GM12878 (cell line): ENCODE measurements at regions of chr3 and their contacts with region 1.

Region 1: DNA sequence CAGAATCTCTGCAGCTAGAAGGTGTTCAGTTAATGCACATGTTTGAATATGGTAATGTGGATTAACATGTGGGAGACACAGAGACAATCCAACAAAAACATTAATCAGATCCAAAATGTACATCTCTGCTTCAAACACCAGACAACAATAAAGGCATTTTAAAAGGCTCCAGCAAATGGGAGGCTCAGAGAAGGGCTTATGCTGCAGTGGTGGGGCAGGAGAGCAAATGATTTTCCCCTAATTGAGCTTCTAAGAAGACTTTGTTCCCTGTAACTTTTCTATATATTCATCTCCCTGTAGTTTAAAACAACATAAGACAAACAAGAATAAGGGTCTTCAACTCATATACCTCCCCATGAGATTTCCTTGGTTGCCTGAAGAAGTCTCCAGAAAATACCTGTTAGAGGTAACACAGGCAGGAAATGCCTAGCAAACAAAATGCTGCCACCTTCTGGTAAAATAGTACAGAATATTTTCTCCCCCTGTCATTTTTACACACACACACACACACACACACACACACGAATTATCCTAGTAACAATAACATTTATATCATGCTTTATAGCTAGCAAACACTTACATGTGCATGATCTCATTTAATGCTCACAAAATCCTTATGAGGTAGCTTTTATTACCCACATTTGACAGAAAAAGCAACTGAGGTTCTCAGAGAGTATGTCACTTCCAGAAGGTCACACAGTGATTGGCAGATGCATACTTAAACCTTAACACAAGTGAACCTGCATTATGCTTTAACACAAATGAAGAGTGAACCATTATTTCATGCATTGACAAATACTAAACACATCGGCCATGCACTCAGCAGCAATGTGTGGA is 123.4 kb upstream of the MB21D2 start:
- DNase-seq: peak; percentile 5
- ATAC-seq: peak; percentile 83
- H3K4me3 ChIP-seq: no peak overlapping the region
- H3K27ac ChIP-seq: no peak overlapping the region
- H3K4me1 ChIP-seq: no peaks in the 10 kb centered on the region
- H3K27me3 ChIP-seq: no peaks in the 10 kb centered on the region
- CTCF ChIP-seq: peak; percentile 22 to 56 (median 38); a peak in 5 of 6 replicates
- EP300 ChIP-seq: no peak
- POLR2A ChIP-seq: no peak
- RAD21 ChIP-seq: peak; percentile 84

Region 2: DNA sequence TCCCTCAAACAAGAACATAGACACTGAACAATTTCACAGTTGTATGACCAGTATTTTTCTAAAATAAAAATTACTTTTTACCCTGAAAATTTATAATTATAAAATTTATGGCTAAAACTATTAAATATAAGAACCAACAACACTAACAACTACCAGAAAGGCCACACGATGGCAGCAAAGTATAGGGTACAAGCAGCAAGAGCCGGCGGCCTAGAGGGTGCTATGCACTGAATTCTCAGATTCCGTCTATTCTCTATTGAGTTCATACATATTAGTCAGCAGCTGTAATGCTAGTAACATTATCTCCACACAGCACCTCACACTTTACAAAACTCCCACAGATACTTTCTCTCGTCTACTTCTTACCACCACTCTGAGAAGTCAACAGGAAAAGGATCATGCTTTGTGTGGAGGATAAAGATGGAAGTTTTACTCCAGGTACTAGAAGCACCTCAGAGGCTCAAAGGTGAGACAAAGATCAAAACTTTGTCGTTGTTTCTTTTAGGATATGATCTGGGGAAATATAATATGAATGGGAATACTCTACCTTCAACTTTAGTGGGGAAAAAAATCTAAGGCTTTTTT is 474.3 kb before region 1 on chr3:
- CTCF ChIA-PET with region 1: interaction called, 15 read pairs
- POLR2A ChIA-PET with region 1: no interaction called
- RAD21 ChIA-PET with region 1: interaction called, 7 read pairs
- SMC1A ChIA-PET with region 1: interaction called, 7 read pairs
- in situ Hi-C with region 1: loop called (anchors 5 kb)
- intact Hi-C with region 1: loop called (anchors 5 kb)
- DNase-seq: peak; percentile 9
- ATAC-seq: peak; percentile 95
- H3K4me3 ChIP-seq: no peak overlapping the region
- H3K27ac ChIP-seq: no peak overlapping the region
- H3K4me1 ChIP-seq: no peaks in the 10 kb centered on the region; the same call in 1 of the 2 replicates
- H3K27me3 ChIP-seq: no peaks in the 10 kb centered on the region; a peak in 1 of 4 replicates
- CTCF ChIP-seq: peak; percentile 51 to 81 (median 56); a peak in 5 of 6 replicates
- EP300 ChIP-seq: no peak
- POLR2A ChIP-seq: no peak
- RAD21 ChIP-seq: peak; percentile 93

Region 3: DNA sequence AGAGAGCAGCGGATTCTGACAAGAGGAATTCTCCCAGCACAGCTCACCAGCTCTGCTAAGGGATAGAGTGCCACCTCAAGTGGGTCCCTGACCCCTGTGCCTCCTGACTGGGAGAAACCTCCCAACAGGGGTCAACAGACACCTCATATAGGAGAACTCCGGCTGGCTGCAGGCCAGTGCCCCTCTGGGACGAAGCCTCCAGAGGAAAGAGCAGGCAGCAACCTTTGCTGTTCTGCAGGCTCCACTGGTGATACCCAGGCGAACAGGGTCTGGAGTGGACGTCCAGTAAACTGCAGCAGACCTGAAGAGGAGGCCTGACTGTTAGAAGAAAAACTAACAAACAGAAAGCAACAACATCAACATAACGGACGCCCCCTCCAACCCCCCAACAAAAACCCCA is 282.4 kb before region 1 on chr3:
- CTCF ChIA-PET with region 1: no interaction called
- POLR2A ChIA-PET with region 1: no interaction called
- RAD21 ChIA-PET with region 1: no interaction called
- SMC1A ChIA-PET with region 1: no interaction called
- in situ Hi-C with region 1: no loop called
- intact Hi-C with region 1: no loop called
- DNase-seq: no peak
- ATAC-seq: no peak
- H3K4me3 ChIP-seq: no peak overlapping the region
- H3K27ac ChIP-seq: no peak overlapping the region
- H3K4me1 ChIP-seq: no peaks in the 10 kb centered on the region
- H3K27me3 ChIP-seq: 0 out of 4 replicates have a peak, but pooled peaks cover 0 to 3% of the 10 kb centered on the region in 2 experiments
- CTCF ChIP-seq: no peak
- EP300 ChIP-seq: no peak
- POLR2A ChIP-seq: no peak
- RAD21 ChIP-seq: no peak

Region 4: DNA sequence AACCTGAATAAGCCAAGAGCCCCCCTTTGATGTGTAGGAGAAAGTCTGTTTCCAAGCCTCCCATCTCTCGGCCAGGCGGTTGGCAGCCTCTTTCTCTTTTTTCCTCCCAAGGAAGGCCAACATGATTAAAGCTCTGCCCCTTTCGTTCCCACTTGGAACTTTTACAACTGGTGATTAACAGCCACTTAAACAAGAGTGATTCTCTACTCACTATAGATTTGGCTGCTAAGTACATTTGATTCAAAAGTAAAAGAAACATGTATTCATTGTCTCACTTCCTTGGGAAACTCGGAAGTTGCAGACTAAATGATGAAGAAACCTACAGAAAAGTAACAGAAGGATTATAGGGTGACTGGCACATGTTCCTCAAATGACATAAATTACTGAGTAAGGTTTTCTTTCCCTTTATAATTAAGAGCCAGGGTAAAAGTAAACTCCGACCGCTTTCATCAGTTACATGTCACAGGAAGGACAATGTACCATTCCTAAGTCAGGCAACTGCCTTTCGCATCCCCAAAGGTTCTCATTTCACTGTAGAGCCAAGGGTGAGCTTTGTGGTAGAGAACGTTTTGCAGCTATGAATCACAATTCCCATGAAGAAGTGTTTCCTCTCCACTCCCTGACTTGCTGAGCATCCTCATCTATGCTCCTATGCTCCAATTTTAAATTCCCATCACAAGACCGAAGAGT is 196.1 kb before region 1 on chr3:
- CTCF ChIA-PET with region 1: interaction called, 10 read pairs
- POLR2A ChIA-PET with region 1: no interaction called
- RAD21 ChIA-PET with region 1: no interaction called
- SMC1A ChIA-PET with region 1: interaction called, 3 read pairs
- in situ Hi-C with region 1: no loop called
- intact Hi-C with region 1: no loop called
- DNase-seq: no peak
- ATAC-seq: no peak
- H3K4me3 ChIP-seq: no peak overlapping the region
- H3K27ac ChIP-seq: peak overlapping the region; percentile 61
- H3K4me1 ChIP-seq: peaks cover 51% of the 10 kb centered on the region
- H3K27me3 ChIP-seq: no peaks in the 10 kb centered on the region
- CTCF ChIP-seq: no peak
- EP300 ChIP-seq: no peak
- POLR2A ChIP-seq: no peak
- RAD21 ChIP-seq: no peak

Region 5: DNA sequence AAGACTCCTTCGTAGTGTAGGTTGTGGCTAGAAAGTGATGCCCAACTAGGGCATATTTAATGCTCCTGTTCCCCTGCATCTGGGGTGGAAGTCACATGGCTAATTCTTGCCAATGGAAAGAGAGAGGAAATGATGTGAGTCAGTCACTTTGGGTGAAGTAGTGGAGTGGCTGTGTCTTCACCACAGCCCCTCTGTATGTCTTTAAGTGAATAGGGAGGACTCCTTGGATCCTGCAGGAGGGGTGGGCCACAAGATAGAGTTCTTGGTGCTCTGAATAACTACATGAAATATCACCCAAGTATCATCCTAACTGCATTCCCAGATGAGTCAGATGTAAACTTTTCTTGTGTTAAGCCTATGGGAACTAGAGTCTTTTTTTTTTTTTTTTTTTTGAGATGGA is 105.6 kb before region 1 on chr3:
- CTCF ChIA-PET with region 1: interaction called, 11 read pairs
- POLR2A ChIA-PET with region 1: no interaction called
- RAD21 ChIA-PET with region 1: no interaction called
- SMC1A ChIA-PET with region 1: interaction called, 9 read pairs
- in situ Hi-C with region 1: no loop called
- intact Hi-C with region 1: loop called (anchors 5 kb)
- DNase-seq: no peak
- ATAC-seq: peak; percentile 23
- H3K4me3 ChIP-seq: no peak overlapping the region
- H3K27ac ChIP-seq: no peak overlapping the region
- H3K4me1 ChIP-seq: no peaks in the 10 kb centered on the region
- H3K27me3 ChIP-seq: no peaks in the 10 kb centered on the region
- CTCF ChIP-seq: no peak
- EP300 ChIP-seq: no peak
- POLR2A ChIP-seq: no peak
- RAD21 ChIP-seq: no peak

Region 6: GRCh38 chr3:193052354-193053045 is 11.4 kb after region 1 on chr3:
- CTCF ChIA-PET with region 1: interaction called, 14 read pairs
- POLR2A ChIA-PET with region 1: no interaction called
- RAD21 ChIA-PET with region 1: interaction called, 3 read pairs
- SMC1A ChIA-PET with region 1: interaction called, 15 read pairs
- in situ Hi-C with region 1: no loop called
- intact Hi-C with region 1: no loop called
- DNase-seq: no peak
- ATAC-seq: no peak
- H3K4me3 ChIP-seq: no peak overlapping the region
- H3K27ac ChIP-seq: no peak overlapping the region
- H3K4me1 ChIP-seq: no peaks in the 10 kb centered on the region
- H3K27me3 ChIP-seq: 0 out of 4 replicates have a peak, but pooled peaks cover 0 to 3% of the 10 kb centered on the region in 2 experiments
- CTCF ChIP-seq: no peak
- EP300 ChIP-seq: no peak
- POLR2A ChIP-seq: no peak
- RAD21 ChIP-seq: no peak